Lower leg skin (tissue), 4 donors: ENCODE measurements at regions of chr15 and their contacts with region 1.

Region 1: DNA sequence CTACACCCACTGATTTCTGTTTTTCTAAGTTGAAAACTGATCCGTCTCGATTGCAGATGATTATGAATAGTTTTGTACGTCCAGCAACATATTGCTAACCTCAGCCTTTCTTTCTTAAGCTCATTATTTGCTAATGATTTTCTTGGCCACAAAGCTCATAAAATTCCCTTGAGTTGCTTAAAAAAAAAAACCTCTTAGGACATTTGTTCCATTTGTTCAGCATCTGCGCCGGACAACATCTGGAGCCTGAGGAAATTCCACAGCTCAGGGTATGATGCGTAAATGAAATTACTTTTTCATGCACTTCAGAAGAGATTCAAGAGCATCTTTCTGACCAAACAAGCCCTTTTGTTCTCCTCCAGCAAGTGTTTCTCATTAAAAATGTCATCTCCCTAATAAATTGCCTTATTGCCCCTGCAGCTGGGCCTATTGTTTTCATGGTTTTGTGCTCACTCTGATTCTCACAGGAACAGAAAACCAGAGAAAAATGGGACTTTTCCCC is 249.1 kb upstream of the MCTP2 start:
- DNase-seq: peak in 1 of 2 donors; percentile 40
- H3K4me3 ChIP-seq: no peak overlapping the region
- CTCF ChIP-seq: no peak
- POLR2A ChIP-seq: no peak

Region 2: DNA sequence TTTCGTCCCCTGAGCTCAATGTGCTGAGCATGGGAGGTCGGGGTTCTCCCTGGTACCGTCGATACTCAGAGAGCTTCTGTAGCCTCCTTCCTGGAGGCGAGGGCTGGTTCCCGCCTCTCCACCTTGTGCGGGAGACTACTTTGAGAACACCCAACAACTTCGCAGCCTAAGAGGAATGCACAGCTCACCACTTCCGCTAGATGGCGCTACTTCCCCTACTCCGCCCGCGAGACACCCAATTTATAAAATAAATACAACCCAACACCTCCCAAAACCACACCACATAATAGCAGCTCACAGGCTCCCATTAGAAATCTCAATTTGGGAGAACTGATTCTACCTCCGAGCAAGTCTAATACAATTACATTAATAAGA is 894.5 kb before region 1 on chr15:
- intact Hi-C with region 1: loop called (anchors 5 kb)
- DNase-seq: peak; percentile 85 to 96
- H3K4me3 ChIP-seq: no peak overlapping the region
- CTCF ChIP-seq: peak in 1 of 3 donors; percentile 54
- POLR2A ChIP-seq: no peak